ENCODE measurements at regions of chr7 and their contacts with region 1.

Region 1: DNA sequence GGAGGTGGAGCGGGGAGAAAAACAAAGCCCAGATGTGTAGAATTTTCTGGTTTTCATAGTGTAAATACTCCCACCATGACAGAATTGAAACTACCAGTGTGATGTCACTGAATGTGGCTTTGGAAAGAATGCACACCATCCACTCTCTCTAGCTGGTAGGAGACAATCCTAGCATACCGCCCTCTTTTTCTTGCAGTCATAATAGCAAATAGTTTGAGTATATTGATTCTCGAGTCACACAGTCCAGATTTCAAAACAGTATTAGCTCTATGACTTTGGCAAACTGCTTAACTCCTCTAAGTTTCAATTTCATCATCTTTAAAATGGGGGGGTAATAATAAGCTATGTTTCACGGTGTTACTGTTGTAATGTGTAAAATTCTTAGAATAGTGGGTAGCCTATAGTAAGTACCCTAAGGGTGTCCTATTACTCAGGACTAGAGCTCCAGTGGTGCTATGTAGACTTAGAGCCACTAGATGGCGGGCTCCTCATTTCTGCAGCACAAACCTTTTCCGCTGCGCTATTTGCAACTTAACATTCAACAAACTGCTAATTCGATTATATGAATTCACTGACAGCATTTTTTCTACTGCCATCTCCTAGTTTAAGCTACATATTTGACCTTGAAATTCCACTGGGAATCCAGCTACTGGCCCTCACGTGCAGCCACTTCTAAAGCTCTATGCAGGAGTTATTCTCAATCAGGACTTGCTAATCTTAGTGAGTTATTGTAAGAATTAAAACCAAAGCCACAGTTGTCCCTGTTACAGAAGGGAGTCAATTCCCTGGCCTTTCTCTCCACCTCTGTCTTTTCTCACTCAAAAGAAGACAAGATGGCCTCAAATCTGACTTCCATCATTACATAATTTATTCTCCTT is 18.7 kb downstream of the TAS2R40 start:
- DNase-seq: peak; percentile 87
- ATAC-seq: peak; percentile 66
- H3K4me3 ChIP-seq: peak overlapping the region; percentile 46; the same call in 1 of the 2 replicates
- H3K27ac ChIP-seq: peak overlapping the region; percentile 62
- H3K4me1 ChIP-seq: peaks cover 45% of the 10 kb centered on the region
- H3K27me3 ChIP-seq: no peaks in the 10 kb centered on the region
- CTCF ChIP-seq: peak; percentile 94

Region 2: GRCh38 chr7:143188994-143189393 is 51.5 kb before region 1 on chr7:
- CTCF ChIA-PET with region 1: no interaction called
- POLR2A ChIA-PET with region 1: no interaction called
- intact Hi-C with region 1: no loop called
- DNase-seq: no peak
- ATAC-seq: no peak
- H3K4me3 ChIP-seq: no peak overlapping the region
- H3K27ac ChIP-seq: no peak overlapping the region
- H3K4me1 ChIP-seq: no peaks in the 10 kb centered on the region
- H3K27me3 ChIP-seq: peaks cover 44% of the 10 kb centered on the region
- CTCF ChIP-seq: no peak

Region 3: GRCh38 chr7:143256932-143257331 is 16.4 kb after region 1 on chr7:
- CTCF ChIA-PET with region 1: interaction called, 6 read pairs
- POLR2A ChIA-PET with region 1: no interaction called
- intact Hi-C with region 1: loop called (anchors 2 kb)
- DNase-seq: no peak
- ATAC-seq: no peak
- H3K4me3 ChIP-seq: no peak overlapping the region
- H3K27ac ChIP-seq: no peak overlapping the region
- H3K4me1 ChIP-seq: peaks cover 38% of the 10 kb centered on the region
- H3K27me3 ChIP-seq: no peaks in the 10 kb centered on the region
- CTCF ChIP-seq: no peak

Region 4: GRCh38 chr7:143271240-143271639 is 30.7 kb after region 1 on chr7:
- CTCF ChIA-PET with region 1: no interaction called
- POLR2A ChIA-PET with region 1: no interaction called
- intact Hi-C with region 1: no loop called
- DNase-seq: no peak
- ATAC-seq: no peak
- H3K4me3 ChIP-seq: no peak overlapping the region
- H3K27ac ChIP-seq: no peak overlapping the region
- H3K4me1 ChIP-seq: 0 out of 2 replicates have a peak, but pooled peaks cover 6% of the 10 kb centered on the region
- H3K27me3 ChIP-seq: no peaks in the 10 kb centered on the region
- CTCF ChIP-seq: no peak

Region 5: DNA sequence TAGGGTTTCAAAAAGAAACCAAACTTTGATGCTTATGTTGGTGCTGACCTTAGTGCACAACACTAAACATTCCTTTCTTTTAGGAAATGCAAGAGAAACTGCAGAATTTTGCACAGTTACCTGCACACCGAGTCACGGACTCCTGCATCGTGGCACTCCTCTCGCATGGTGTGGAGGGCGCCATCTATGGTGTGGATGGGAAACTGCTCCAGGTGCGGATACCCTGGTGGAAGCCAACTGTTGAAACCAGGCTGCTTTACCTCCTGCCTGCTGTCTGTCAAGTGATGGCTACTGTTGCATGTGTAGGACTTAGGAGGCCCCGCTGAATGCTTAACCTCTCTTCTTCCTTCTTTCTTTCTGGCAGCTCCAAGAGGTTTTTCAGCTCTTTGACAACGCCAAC is 59.3 kb after region 1 on chr7:
- CTCF ChIA-PET with region 1: interaction called, 15 read pairs
- POLR2A ChIA-PET with region 1: interaction called, 5 read pairs
- intact Hi-C with region 1: loop called (anchors 1 kb)
- DNase-seq: peak; percentile 52
- ATAC-seq: peak; percentile 5; the same call in 1 of the 2 replicates
- H3K4me3 ChIP-seq: no peak overlapping the region
- H3K27ac ChIP-seq: peak overlapping the region; percentile 77
- H3K4me1 ChIP-seq: peaks cover 60% of the 10 kb centered on the region
- H3K27me3 ChIP-seq: no peaks in the 10 kb centered on the region
- CTCF ChIP-seq: peak; percentile 83

Region 6: GRCh38 chr7:143372070-143372469 is 131.5 kb after region 1 on chr7:
- CTCF ChIA-PET with region 1: interaction called, 6 read pairs
- POLR2A ChIA-PET with region 1: no interaction called
- intact Hi-C with region 1: loop called (anchors 2 kb)
- DNase-seq: peak; percentile 81
- ATAC-seq: peak; percentile 19
- H3K4me3 ChIP-seq: no peak overlapping the region
- H3K27ac ChIP-seq: peak overlapping the region; percentile 42
- H3K4me1 ChIP-seq: peaks cover 50% of the 10 kb centered on the region
- H3K27me3 ChIP-seq: no peaks in the 10 kb centered on the region
- CTCF ChIP-seq: peak; percentile 52

Region 7: GRCh38 chr7:143416565-143417149 is 176.1 kb after region 1 on chr7:
- CTCF ChIA-PET with region 1: interaction called, 7 read pairs
- POLR2A ChIA-PET with region 1: no interaction called
- intact Hi-C with region 1: loop called (anchors 2 kb)
- DNase-seq: peak; percentile 80
- ATAC-seq: peak; percentile 25; the same call in 1 of the 2 replicates
- H3K4me3 ChIP-seq: peak overlapping the region; percentile 56; the same call in 1 of the 2 replicates
- H3K27ac ChIP-seq: peak overlapping the region; percentile 89
- H3K4me1 ChIP-seq: peaks cover 32% of the 10 kb centered on the region
- H3K27me3 ChIP-seq: no peaks in the 10 kb centered on the region
- CTCF ChIP-seq: peak; percentile 86

Region 8: GRCh38 chr7:143988976-143989745 is 748.6 kb after region 1 on chr7:
- CTCF ChIA-PET with region 1: no interaction called
- POLR2A ChIA-PET with region 1: no interaction called
- intact Hi-C with region 1: no loop called
- DNase-seq: no peak
- ATAC-seq: peak; percentile 68
- H3K4me3 ChIP-seq: no peak overlapping the region
- H3K27ac ChIP-seq: no peak overlapping the region
- H3K4me1 ChIP-seq: 0 out of 2 replicates have a peak, but pooled peaks cover 6% of the 10 kb centered on the region
- H3K27me3 ChIP-seq: no peaks in the 10 kb centered on the region
- CTCF ChIP-seq: no peak